ENCODE measurements at regions of chr17 and their contacts with region 1.

Region 1: DNA sequence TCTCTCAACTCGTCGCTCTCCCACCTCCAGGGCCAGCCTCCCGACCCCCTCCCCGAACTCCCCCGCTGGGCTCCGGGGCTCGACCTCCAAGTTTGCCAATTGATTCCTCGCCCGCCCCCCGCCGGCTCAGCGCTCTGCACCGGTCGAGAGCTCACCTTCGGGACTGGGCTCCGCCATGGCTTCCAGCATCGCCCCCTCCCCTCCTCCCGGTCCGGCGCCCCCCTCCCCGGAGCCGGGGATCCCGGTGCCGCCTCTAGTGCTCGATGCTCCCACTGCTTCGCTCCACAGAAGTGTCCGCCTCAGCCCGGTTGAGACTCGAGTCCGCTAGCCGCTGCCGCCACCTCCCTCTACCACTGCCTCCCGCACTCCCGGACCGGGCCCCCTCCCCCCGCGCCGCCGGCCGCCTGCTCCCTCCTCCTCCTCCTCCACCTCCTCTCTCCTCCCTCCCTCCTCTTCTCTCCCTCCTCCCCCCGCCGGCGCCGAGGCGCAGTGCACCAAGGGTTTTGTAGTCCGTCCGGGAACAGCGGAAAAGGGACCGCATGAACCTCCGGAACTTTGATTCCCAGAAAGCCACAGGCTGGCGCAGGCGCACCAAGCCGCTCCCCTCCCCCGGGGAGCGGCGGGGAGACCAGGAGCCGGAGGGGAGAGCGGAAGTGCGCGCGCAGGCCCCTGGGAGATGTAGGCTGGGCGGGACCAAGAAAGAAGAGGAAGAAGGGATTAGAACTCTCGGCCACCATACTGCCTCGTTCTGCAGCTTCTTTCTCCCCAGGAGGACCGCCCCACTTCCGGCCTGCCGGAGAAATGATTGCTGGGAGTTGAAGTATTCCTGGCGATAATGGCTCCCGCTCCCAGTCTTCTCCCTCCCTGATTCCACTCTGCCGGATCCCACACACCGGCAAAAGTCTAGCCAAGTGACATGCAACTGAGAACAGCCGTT is at the start of gene PHF23:
- DNase-seq: peak; percentile 96
- ATAC-seq: peak; percentile 71
- H3K4me3 Mint-ChIP-seq: peak within 1 kb of the TSS; percentile 97
- H3K27ac Mint-ChIP-seq: peak within 1 kb of the TSS; percentile 97
- H3K4me1 Mint-ChIP-seq: peaks cover 49% of the 10 kb centered on the region
- H3K27me3 Mint-ChIP-seq: no peaks in the 10 kb centered on the region
- total RNA-seq, gene PHF23: 49.9 to 50.4 TPM

Region 2: DNA sequence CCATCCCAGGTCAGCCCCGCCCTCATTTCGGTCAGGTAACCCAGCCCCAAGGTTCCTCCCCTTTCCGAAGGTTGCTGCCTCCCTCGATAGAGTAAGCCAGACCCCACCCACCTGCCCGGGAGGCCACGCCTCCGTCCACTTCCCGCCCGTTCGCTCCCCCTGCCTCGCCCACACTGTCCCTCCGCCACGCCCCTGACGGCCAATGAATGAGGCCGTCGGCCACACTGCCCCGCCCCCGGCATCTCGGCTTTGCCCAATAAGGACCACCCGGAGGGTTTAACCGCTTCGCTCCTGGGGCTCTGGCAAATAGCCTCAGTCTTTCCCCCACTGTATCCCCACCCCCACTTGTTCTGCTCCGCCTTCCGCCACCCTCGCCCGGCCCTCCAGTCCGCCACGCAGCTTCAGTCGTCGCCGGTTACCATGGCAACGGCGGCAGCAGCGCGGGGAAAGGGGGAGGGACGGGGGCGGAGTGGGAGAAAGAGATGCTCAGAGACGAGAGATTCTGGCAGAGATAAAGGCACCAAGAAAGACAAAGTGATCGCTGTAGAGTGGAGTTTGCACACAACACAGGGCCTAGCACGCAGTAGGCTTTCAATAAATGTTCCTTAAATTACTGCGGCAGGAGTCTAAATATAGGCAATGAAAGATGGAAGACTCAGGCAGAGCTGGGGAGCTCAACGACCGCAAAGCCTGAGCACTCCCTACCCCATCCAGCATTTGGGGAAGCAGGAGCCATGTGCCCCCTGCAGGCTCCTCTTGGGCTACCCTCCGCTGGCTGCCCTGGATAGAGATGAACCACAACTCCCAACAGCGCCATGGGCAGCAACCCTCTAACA is 24.8 kb before region 1 on chr17:
- POLR2A ChIA-PET with region 1: interaction called, 162 read pairs
- DNase-seq: peak; percentile 100
- ATAC-seq: peak; percentile 81
- H3K4me3 Mint-ChIP-seq: peak overlapping the region; percentile 97
- H3K27ac Mint-ChIP-seq: peak overlapping the region; percentile 95
- H3K4me1 Mint-ChIP-seq: peaks cover 50% of the 10 kb centered on the region
- H3K27me3 Mint-ChIP-seq: peaks cover 7% of the 10 kb centered on the region

Region 3: GRCh38 chr17:7219812-7220581 is 19.4 kb before region 1 on chr17 and contains the starts of genes ACADVL and DLG4:
- POLR2A ChIA-PET with region 1: interaction called, 162 read pairs
- DNase-seq: peak; percentile 82
- ATAC-seq: peak; percentile 74
- H3K4me3 Mint-ChIP-seq: peak within 1 kb of the TSS; percentile 97
- H3K27ac Mint-ChIP-seq: peak within 1 kb of the TSS; percentile 95
- H3K4me1 Mint-ChIP-seq: peaks cover 42% of the 10 kb centered on the region
- H3K27me3 Mint-ChIP-seq: no peaks in the 10 kb centered on the region
- total RNA-seq, gene ACADVL: 417 to 434 TPM
- total RNA-seq, gene DLG4: 21.2 to 22.4 TPM

Region 4: DNA sequence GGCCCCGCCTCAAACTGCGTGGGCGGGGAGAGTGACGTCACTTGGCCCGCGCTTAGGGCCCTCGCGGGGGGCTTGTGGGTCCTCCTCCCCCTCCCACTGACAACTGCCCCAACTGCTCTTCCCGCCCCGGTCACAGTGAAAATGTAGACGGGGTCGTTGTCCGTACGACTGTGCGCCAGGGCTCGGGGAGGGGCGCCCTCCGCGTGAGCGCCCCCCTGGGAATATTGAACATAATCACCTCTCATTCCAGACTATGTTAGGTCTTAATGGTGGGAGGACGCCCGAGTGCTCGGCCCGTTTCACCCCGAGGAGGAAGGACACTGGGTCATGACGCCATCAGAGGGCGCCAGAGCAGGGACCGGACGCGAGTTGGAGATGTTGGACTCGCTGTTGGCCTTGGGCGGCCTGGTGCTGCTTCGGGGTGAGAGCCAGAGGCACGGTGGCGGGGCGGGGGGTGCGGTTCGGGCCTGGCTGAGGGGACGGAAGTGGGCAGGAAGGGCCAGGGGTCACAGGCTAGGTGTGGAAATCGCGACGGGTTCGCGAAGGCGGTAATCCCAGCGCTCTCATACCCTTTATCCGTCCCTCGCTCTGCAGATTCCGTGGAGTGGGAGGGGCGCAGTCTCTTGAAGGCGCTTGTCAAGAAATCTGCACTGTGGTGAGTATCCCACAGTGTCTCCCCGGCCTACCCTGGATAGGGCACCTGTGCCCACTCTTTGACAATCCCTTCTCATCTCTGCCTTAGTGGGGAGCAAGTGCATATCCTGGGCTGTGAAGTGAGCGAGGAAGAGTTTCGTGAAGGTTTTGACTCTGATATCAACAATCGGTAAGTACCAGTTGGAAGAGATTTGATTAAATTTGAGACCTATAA is 13.1 kb after region 1 on chr17 and contains the start of gene ELP5:
- POLR2A ChIA-PET with region 1: interaction called, 56 read pairs
- DNase-seq: peak; percentile 91
- ATAC-seq: peak; percentile 66
- H3K4me3 Mint-ChIP-seq: peak within 1 kb of the TSS; percentile 99
- H3K27ac Mint-ChIP-seq: peak within 1 kb of the TSS; percentile 100
- H3K4me1 Mint-ChIP-seq: peaks cover 39% of the 10 kb centered on the region
- H3K27me3 Mint-ChIP-seq: no peaks in the 10 kb centered on the region
- total RNA-seq, gene ELP5: 49.5 to 52.0 TPM

Region 5: DNA sequence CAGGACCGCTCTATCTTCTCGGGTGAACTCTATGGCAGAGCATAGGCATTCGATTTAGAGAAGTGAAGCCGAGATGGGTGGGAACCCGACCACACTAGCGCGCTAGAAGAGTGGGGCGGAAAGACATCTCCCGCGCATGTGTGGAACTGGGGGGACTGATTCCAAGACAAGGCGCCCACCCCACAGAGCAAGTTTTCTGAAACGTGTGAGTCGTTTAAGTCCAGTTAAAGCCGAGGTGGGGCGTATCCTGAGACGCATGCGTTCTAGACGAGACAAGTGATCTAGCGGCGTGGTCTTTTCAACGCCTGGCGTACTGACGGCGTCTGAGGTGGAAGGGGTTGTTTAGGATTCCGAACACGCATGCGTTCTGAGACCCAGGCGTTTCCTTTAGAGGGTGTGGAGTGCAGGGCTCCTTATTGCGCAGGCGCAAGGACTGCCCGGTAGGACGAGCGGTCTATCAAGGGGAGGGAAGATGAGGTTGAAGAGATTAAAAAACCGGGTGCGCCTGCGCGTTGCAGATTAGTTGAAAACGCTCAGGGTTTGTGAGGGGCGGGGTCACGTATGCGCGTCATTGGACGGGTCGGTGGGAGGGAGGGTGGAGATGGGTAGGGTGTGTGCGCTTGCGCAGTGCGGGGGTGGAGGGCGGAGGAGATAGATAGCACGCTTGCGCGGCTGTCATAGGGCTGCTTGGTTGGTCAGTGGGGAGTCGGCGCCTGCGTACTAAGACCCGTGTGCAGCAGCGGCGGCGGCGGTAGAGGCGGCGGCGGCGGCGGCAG is 67.7 kb after region 1 on chr17 and contains the start of gene EIF5A:
- POLR2A ChIA-PET with region 1: interaction called, 10 read pairs
- DNase-seq: peak; percentile 99
- ATAC-seq: peak; percentile 81
- H3K4me3 Mint-ChIP-seq: peak within 1 kb of the TSS; percentile 89
- H3K27ac Mint-ChIP-seq: peak within 1 kb of the TSS; percentile 98
- H3K4me1 Mint-ChIP-seq: peaks cover 29% of the 10 kb centered on the region
- H3K27me3 Mint-ChIP-seq: no peaks in the 10 kb centered on the region
- total RNA-seq, gene EIF5A: 420 to 451 TPM

Measured in activated naive CD8-positive, alpha-beta T cell treated with anti-CD3 and anti-CD28 coated beads, Interleukin-2, amount 10 ng/mL, durations not matched to agents 7 days and 5 days (primary cell).